Activated T-helper 2 cell treated with anti-CD3 and anti-CD28 coated beads, Interferon-gamma antibody, Interleukin-2, Interleukin-4, amounts not matched to agents 10 μg/mL and 5 μg/mL and 100 μg/mL, durations not matched to agents 14 hours and 24 hours and 36 hours (primary cell): ENCODE measurements at regions of chr2 and their contacts with region 1.

Region 1: DNA sequence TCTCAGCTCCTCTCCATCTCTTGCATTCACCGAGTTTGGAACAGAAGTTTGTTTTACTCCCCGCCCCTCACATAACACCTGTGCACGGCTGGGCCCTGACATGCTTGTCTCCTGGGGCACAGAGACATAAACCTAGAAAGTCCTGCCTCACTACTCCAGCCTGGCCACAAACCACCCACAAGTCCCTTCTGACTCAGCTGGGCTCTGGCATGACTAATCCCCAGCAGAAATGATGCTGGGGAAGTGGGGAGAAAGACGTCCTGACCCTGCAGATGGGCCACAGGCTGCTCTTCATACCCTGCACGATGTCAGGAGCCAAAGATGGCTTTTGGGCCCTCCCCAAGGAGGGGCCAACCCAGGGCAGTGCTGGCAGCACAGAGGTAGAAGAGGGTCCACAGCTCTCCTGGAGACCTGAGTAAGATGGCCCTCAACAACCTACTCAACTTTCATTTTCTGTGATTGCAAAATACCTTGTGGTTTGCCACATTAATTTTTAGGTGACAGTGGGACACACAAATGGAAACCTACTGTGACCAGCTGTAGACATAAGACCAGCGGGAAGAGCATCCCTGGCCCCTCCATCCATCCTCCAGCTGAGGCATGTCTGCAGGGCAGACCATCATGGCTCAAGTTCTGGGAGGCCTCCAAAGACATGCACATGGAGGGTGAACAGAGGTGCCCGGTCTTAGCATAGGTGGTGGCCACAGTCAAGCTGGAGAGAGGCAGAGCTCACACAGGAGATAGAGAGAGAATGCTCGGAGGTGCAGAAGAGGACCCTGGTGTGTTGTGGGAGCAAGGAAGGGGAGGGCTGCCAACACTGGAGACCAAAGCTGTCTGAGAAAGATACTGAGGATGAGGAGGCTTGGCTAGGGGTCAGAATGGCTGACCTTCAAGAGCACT is 40.0 kb downstream of the DNMT3A start:
- DNase-seq: peak; percentile 74
- H3K4me3 Mint-ChIP-seq: peak overlapping the region; percentile 27
- H3K27ac Mint-ChIP-seq: peak overlapping the region; percentile 56
- H3K4me1 Mint-ChIP-seq: peaks cover 39% of the 10 kb centered on the region
- H3K27me3 Mint-ChIP-seq: no peaks in the 10 kb centered on the region

Region 2: DNA sequence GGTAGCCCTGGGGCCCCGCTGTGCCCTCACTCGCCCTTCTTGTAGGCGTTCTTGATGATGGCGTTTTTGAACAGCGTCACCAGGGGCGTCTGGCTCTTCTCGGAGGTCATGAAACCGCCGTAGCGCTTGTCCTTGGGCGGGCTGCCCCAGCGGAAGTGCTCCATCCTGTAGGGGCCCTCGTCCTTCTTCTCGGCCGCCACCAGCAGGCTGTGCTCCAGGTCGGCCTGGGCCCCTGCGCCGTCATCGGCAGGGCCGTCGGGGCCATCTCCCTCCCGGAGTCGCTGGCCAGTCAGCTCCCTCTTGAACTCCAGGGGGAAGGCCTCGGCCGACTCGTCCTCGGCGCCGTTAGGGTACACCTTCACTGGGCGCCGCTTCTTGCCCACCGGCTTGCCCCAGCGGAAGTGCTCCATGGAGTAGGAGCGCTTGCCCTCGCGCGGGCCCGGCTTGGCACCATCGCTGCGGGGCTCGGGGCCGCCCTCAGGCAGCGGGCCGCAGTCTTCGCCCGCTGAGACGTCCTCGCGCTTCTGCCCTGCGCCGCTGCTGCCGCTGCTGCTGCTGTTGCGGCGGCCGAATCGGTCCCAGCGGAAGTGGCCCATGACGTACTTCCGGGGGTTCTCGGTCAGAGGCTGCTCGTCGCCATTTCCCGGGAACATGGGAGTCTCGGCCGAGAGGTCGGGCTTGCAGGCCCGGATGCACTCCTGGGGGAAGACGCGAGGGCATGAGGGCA is 140.5 kb before region 1 on chr2:
- intact Hi-C with region 1: no loop called
- DNase-seq: peak; percentile 67
- H3K4me3 Mint-ChIP-seq: peak overlapping the region; percentile 81
- H3K27ac Mint-ChIP-seq: peak overlapping the region; percentile 78
- H3K4me1 Mint-ChIP-seq: peaks cover 20% of the 10 kb centered on the region
- H3K27me3 Mint-ChIP-seq: peaks cover 21% of the 10 kb centered on the region

Region 3: GRCh38 chr2:25265802-25266201 is 35.9 kb before region 1 on chr2:
- intact Hi-C with region 1: no loop called
- DNase-seq: no peak
- H3K4me3 Mint-ChIP-seq: no peak overlapping the region
- H3K27ac Mint-ChIP-seq: no peak overlapping the region
- H3K4me1 Mint-ChIP-seq: peaks cover 7% of the 10 kb centered on the region
- H3K27me3 Mint-ChIP-seq: no peaks in the 10 kb centered on the region

Region 4: DNA sequence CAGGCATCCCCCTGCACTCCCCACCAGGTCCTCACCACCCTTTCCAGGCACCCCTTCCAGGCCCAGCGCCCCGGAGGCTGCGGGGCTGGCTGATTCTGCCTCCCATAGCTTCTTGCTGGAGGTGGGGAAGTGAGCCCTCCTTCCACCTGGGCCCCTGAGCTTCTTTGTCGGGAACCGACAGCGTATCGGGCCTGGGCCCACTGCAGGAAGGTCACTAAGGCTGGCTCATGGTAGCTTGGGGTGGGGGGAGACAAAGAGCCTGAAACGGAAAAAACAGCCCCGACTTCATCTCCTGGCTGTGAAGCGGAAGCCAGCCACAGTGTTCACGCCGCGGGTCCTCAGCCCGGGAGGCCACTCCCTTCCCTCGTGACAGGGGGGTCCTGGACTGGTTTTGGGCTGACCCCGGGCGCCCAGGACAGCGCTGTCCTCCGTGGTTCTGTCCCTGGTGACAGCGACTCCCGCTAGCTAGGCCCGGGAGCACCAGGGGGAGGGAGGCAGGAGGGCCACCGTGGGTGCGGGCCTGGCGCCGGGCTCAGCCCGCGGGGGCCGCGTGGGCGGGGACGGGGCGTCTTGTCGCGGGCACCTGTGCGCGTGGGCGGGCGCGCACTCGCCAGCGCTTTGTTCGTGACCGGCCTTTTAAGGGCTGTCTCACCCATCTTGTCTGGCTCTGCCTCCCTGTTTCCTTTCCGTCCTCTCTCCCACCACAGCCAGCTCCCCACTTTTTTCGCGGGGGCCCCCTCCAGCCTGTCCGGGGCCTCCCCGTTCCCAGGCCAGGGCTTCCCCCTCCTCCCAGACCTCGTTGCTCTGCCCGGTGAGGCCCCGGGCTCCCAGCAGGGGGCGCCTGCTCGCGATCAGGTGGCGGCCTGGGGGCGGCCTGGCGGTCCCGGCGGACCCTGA is 24.9 kb before region 1 on chr2:
- intact Hi-C with region 1: loop called (anchors 1 kb)
- DNase-seq: peak; percentile 70
- H3K4me3 Mint-ChIP-seq: peak overlapping the region; percentile 19
- H3K27ac Mint-ChIP-seq: peak overlapping the region; percentile 86
- H3K4me1 Mint-ChIP-seq: peaks cover 54% of the 10 kb centered on the region
- H3K27me3 Mint-ChIP-seq: no peaks in the 10 kb centered on the region

Region 5: DNA sequence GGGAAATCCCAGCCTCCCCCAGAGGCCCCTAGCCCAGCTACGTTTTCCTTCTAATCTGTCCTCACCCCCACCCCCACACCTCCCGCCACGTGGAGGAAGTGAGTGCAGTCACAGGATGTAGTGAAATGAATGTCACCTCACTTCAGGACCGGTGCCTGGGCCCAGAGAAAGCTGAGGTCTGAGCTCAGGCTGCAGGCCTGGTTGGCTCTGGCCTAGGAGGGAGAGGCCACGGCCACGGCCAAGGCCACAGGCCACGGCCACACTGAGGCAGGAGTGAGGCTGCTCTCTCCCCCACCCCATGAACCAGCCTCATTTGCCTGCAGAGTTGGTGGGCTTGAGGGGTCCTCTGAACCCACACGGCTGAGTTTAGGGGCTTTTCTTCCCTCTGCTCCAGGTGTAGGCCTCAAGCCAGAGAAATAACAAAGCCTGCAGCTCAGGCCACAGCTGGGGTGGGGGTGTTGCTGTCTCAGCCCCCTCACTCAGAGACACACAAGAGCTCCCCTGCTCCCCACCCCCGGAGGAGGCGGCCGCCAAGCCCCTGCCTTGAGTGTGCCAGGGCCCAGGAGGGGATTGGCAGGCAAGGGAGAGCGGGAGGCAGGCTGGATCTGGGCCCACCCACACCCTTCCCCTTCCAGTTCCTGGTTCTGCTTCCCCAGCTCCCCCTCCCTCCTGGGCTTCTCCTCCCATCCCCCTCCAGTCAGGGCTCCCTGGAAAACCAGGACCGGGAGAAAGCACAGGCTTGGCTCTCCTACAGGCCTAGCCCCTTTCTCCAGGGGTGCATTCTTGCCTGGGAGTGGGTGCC is 13.0 kb after region 1 on chr2:
- intact Hi-C with region 1: loop called (anchors 1 kb)
- DNase-seq: peak; percentile 72
- H3K4me3 Mint-ChIP-seq: peak overlapping the region; percentile 86
- H3K27ac Mint-ChIP-seq: peak overlapping the region; percentile 97
- H3K4me1 Mint-ChIP-seq: peaks cover 53% of the 10 kb centered on the region
- H3K27me3 Mint-ChIP-seq: no peaks in the 10 kb centered on the region

Region 6: GRCh38 chr2:25331686-25332365 is 30.1 kb after region 1 on chr2:
- intact Hi-C with region 1: loop called (anchors 2 kb)
- DNase-seq: no peak
- H3K4me3 Mint-ChIP-seq: no peak overlapping the region
- H3K27ac Mint-ChIP-seq: peak overlapping the region; percentile 68
- H3K4me1 Mint-ChIP-seq: peaks cover 52% of the 10 kb centered on the region
- H3K27me3 Mint-ChIP-seq: no peaks in the 10 kb centered on the region